ENCODE measurements at regions of chr3 and their contacts with region 1.

Region 1: DNA sequence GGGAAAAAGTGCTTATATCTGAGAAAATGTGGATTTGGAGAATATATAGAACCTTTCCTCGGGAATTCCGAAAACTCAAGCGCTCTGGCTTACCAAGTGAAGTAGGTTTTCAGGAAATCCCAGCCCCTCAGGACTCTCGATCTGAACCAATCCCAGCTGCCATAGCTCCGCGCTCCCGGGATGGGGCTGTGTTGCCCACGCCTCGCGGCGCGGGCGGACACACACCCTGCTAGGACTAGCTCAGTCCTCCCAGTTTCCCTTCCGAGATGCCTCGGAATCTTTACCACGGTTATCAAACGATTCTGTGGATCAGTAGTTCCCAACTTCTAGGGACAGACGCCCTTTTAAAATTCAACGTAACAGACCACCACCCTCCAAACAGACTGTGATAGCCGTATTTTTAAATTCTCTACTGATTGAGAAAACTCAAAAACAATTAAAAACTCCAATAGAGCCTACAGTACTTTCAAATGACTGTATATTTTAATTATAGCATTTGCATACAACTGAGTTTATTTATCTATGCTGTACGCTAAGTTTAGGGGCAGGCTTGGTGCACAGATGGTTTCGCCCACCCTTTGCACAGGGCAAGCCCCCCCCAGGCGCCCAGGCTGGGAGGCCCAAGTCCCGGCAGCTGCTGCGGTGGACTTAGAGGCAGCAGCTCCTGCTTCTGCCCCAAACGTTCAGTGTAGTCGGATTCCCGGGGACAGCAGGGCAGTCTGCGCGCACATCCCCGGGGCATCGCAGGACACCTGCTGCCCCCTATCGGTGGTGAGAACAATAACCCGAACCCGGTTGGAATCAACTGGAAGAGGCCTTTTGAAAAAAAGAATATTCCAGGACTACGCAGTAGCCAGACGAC is 52.3 kb downstream of the CCDC54 start:
- DNase-seq: peak; percentile 46 to 65 (median 47)
- H3K4me3 ChIP-seq: peak overlapping the region in 1 of 3 experiments; percentile 90
- H3K4me3 Mint-ChIP-seq: peak overlapping the region; percentile 42 to 92
- H3K27ac ChIP-seq: no peak overlapping the region
- H3K27ac Mint-ChIP-seq: peak overlapping the region in 1 of 7 donors; percentile 68
- H3K4me1 ChIP-seq: peaks cover 27 to 39% of the 10 kb centered on the region in 2 donors
- H3K4me1 Mint-ChIP-seq: peaks cover 34% of the 10 kb centered on the region
- H3K27me3 ChIP-seq: peaks cover 5 to 30% of the 10 kb centered on the region in 2 donors
- H3K27me3 Mint-ChIP-seq: peaks cover 25 to 33% (median 26%) of the 10 kb centered on the region in 3 donors
- CTCF ChIP-seq: peak; percentile 85

Region 2: GRCh38 chr3:106699122-106699521 is 730.4 kb before region 1 on chr3:
- intact Hi-C with region 1: no loop called
- DNase-seq: no peak
- H3K4me3 ChIP-seq: no peak overlapping the region
- H3K4me3 Mint-ChIP-seq: no peak overlapping the region
- H3K27ac ChIP-seq: no peak overlapping the region
- H3K27ac Mint-ChIP-seq: no peak overlapping the region
- H3K4me1 ChIP-seq: no peaks in the 10 kb centered on the region
- H3K4me1 Mint-ChIP-seq: no peaks in the 10 kb centered on the region
- H3K27me3 ChIP-seq: no peaks in the 10 kb centered on the region
- H3K27me3 Mint-ChIP-seq: peaks cover 0 to 2% (median 0%) of the 10 kb centered on the region in 3 donors
- CTCF ChIP-seq: no peak

Region 3: DNA sequence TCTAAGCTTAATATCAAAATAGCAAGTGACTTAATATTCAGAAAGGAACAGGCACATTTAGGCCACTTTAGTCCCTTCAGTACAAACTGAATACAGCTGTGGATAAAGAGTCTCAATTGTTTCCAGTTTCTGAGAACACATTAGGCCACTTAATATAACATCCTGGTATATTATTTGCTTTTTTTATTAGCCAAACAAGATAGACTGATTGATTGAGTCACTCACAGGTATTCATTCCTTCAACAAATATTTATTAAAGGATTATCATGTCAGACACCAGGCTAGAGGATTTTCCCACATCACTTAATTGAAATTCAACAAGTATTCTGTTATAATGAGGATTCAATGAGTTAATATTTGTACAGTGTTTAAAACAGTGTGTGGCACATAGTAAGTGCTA is 313.8 kb before region 1 on chr3:
- intact Hi-C with region 1: no loop called
- DNase-seq: no peak
- H3K4me3 ChIP-seq: no peak overlapping the region
- H3K4me3 Mint-ChIP-seq: no peak overlapping the region
- H3K27ac ChIP-seq: no peak overlapping the region
- H3K27ac Mint-ChIP-seq: no peak overlapping the region
- H3K4me1 ChIP-seq: no peaks in the 10 kb centered on the region
- H3K4me1 Mint-ChIP-seq: peaks cover 11% of the 10 kb centered on the region
- H3K27me3 ChIP-seq: no peaks in the 10 kb centered on the region
- H3K27me3 Mint-ChIP-seq: peaks cover 0 to 3% (median 1%) of the 10 kb centered on the region in 3 donors
- CTCF ChIP-seq: no peak

Region 4: DNA sequence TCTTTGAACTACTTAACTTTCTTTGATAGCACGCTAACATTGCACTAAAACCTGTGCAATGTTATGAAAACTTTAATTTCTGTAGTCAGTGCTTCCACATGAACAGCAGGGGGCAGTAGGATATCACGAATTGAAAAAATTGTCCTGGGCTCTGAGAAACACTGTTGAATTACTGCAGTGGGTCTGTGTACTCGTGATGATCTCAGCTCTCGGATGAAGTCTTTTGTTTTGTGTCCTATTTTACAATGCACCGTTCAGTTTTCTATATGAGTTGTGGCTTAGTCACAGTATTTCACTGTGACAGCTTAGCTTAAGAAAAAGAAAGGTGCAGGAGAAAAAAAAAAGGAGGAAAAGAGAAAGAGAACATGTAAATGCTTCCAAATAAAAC is 193.6 kb before region 1 on chr3:
- intact Hi-C with region 1: loop called (anchors 10 kb)
- DNase-seq: peak; percentile 44 to 62 (median 56)
- H3K4me3 ChIP-seq: peak overlapping the region; percentile 16 to 63 (median 26)
- H3K4me3 Mint-ChIP-seq: peak overlapping the region; percentile 59 to 72
- H3K27ac ChIP-seq: no peak overlapping the region
- H3K27ac Mint-ChIP-seq: no peak overlapping the region
- H3K4me1 ChIP-seq: peaks cover 10 to 11% of the 10 kb centered on the region in 2 donors
- H3K4me1 Mint-ChIP-seq: peaks cover 12% of the 10 kb centered on the region
- H3K27me3 ChIP-seq: no peaks in the 10 kb centered on the region
- H3K27me3 Mint-ChIP-seq: peaks cover 0 to 3% (median 1%) of the 10 kb centered on the region in 3 donors
- CTCF ChIP-seq: peak; percentile 88

Region 5: DNA sequence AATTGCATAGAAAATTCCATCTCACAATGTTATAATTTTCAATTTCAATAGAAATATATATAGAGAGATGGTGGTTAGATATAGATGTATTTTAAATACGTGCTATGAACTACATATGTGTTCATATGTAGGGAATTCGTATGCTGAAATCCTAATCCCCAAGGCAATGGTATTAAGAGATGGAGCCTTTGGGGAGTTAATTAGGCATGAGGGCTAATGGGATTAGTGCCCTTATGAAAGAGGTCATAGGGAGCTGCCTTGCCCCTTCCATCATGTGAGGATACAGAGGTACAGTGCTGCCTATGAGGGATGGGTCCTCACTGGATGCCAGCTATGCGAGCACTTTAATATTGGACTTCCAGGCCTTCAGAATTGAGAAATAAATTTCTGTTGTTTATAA is 132.0 kb before region 1 on chr3:
- intact Hi-C with region 1: no loop called
- DNase-seq: no peak
- H3K4me3 ChIP-seq: no peak overlapping the region
- H3K4me3 Mint-ChIP-seq: no peak overlapping the region
- H3K27ac ChIP-seq: no peak overlapping the region
- H3K27ac Mint-ChIP-seq: no peak overlapping the region
- H3K4me1 ChIP-seq: no peaks in the 10 kb centered on the region
- H3K4me1 Mint-ChIP-seq: no peaks in the 10 kb centered on the region
- H3K27me3 ChIP-seq: no peaks in the 10 kb centered on the region
- H3K27me3 Mint-ChIP-seq: no peaks in the 10 kb centered on the region
- CTCF ChIP-seq: no peak

Region 6: GRCh38 chr3:107524841-107525643 is 95.5 kb after region 1 on chr3:
- intact Hi-C with region 1: loop called in 1 of 2 experiments (anchors 5 kb)
- DNase-seq: peak; percentile 42 to 59 (median 44)
- H3K4me3 ChIP-seq: peak overlapping the region; percentile 93 to 98 (median 95)
- H3K4me3 Mint-ChIP-seq: peak overlapping the region; percentile 98 to 99
- H3K27ac ChIP-seq: peak overlapping the region in 1 of 2 donors; percentile 85
- H3K27ac Mint-ChIP-seq: peak overlapping the region; percentile 83 to 91 (median 87)
- H3K4me1 ChIP-seq: peaks cover 15 to 16% of the 10 kb centered on the region in 2 donors
- H3K4me1 Mint-ChIP-seq: peaks cover 28% of the 10 kb centered on the region
- H3K27me3 ChIP-seq: peaks cover 0 to 3% of the 10 kb centered on the region in 2 donors
- H3K27me3 Mint-ChIP-seq: peaks cover 0 to 6% (median 4%) of the 10 kb centered on the region in 3 donors
- CTCF ChIP-seq: no peak